AG04449 (cell line): ENCODE measurements at regions of chr1 and their contacts with region 1.

Region 1: GRCh38 chr1:108643492-108644335 is 17.2 kb downstream of the HENMT1 start:
- DNase-seq: peak; percentile 37
- H3K4me3 ChIP-seq: no peak overlapping the region
- CTCF ChIP-seq: peak; percentile 46

Region 2: DNA sequence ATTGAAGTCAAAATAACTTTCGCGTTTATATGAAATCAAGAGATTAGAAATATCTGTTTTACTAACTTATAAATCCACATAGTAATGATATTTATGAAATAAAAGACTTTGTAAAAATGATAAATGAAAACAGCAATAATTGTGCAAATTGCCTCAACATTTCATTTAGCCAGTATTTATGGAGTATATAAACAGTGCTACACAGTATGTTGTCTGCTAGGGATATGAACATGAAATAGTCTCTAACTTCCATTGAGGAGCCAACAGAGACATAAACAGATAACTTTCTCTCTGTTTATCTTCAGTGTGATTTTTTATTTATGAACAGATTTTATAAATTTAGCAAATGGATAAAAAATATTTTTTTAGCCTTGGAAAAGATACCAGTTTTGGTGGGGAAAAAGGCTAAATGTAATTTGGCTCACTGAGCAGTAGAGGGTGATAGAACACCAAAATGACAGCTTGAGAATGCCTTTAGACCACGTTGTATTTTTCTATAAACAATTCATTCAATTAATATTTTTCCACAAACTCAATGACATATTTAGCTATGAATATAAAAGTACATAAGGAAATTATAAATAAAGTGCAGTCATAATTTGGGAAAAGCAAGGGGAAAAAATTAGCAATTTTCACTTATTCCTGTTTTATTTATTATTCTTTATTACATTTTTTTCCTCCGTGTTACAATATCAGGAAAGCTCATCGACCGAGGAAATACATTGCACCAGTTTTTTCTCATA is 131.3 kb before region 1 on chr1:
- CTCF ChIA-PET with region 1: interaction called, 303 read pairs
- POLR2A ChIA-PET with region 1: no interaction called
- DNase-seq: no peak
- H3K4me3 ChIP-seq: no peak overlapping the region
- CTCF ChIP-seq: peak; percentile 63

Region 3: DNA sequence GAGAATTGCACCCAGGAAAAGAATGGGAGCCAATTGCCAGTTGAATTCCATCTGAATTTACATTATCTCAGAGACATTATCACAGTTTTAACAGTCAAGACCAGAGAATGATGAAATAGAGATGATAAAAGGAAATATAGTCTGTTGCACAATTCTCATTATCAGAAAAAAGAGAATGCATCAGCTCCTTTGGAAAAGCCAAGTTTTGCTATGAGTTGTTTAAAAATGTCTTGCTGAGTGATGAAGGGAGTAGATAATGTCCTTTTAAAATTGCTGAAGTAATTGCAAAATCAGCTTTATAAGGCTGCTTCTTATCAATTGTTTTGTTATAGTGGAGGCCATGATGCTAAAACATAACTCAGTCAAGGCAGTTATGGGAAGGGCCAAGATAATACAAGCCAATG is 121.7 kb before region 1 on chr1:
- CTCF ChIA-PET with region 1: interaction called, 20 read pairs
- POLR2A ChIA-PET with region 1: no interaction called
- DNase-seq: no peak
- H3K4me3 ChIP-seq: no peak overlapping the region
- CTCF ChIP-seq: no peak